ENCODE measurements at regions of chr1 and their contacts with region 1.

Region 1: DNA sequence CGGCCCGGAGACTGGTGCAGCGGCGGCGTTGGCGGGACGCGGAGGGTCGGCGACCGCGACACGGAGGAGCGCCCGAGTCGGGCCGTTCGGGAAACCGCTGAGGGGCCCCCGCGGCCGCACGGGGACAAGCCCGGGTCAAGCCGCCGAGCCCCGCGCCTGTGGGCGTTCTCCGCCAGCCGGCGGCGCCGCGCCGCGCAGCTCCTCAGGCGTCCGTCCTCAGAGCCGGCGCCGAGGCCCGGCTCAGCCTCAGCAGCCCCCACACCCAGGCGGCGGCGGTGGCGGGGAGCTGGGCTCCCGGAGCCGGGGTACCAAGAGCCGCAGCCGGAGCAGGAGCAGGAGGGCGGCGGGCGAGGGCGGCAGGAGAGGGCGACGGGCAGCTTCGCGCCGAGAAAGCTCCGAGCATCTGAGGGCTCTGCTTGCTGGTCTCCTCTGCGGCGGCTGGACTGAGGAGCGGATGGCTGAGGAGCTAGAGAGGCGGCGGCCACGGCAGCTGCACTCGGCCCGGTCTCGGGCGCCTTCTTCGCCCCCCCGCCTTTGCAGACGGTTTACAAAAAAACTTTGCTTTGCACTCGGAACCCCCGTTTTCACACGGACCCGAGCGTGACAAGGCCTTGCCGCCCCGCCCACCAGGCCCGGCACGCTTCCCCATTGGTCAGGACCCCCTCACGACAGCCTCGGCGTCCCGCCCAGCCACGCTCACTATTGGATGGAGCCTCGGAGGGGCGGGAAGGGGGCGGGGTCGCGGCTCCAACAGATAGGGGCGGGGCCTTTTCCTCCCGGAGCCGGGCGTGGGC is at the start of gene SLC30A1:
- DNase-seq: peak; percentile 98
- H3K4me3 ChIP-seq: peak within 1 kb of the TSS; percentile 74 to 99 (median 98)
- H3K27ac ChIP-seq: peak within 1 kb of the TSS; percentile 64
- H3K4me1 ChIP-seq: peaks cover 33% of the 10 kb centered on the region
- H3K27me3 ChIP-seq: no peaks in the 10 kb centered on the region
- CTCF ChIP-seq: no peak
- POLR2A ChIP-seq: peak; percentile 94
- total RNA-seq, gene SLC30A1: 21.5 and 22.1 TPM in 2 replicates

Region 2: DNA sequence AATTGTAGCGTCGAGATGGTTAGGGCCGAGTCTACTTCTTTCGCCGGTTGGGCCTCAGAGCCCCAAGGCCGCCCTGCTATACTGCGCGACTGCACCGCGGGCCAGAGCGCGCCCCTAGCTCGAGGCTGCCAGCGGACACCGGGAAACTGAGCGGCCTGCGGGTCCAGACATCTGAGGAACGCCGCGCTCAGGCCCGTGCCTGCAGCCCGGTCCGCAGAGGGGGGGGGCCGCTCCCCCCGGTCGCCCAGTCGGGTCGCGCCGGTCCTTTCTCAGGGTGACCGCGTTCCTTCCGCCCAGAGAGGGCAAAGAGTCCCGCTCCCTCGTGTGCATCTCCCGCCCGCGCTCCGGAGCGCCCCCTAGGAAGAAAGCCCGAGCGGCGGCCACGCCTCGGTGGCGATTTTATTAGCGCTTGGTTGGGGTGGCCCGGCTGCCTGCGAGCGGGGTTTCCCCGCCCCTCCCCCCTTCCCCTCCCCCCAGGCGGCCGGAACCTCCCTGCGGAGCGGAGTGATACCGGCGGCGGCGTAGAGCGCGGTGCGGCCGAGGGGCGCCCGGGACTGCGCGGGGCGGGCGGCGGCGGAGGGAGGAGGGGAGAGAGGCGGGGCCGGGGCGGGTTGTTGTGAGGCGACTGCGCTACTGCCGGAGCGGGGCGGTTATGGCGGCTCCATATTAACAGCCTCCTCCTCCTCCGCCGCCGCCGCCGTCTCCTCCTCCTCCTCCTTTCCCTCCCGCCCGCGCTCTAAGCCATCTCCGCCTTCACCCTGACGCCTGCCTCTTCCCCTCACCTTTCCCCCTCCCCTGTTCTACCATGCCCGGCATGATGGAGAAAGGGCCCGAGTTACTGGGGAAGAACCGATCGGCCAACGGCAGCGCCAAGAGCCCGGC is 319.8 kb before region 1 on chr1 and contains the start of gene RCOR3:
- CTCF ChIA-PET with region 1: no interaction called
- POLR2A ChIA-PET with region 1: no interaction called
- dilution Hi-C with region 1: no loop called
- intact Hi-C with region 1: loop called (anchors 2 kb)
- DNase-seq: peak; percentile 80
- H3K4me3 ChIP-seq: peak within 1 kb of the TSS; percentile 84 to 95 (median 86)
- H3K27ac ChIP-seq: peak within 1 kb of the TSS; percentile 85
- H3K4me1 ChIP-seq: peaks cover 13% of the 10 kb centered on the region
- H3K27me3 ChIP-seq: no peaks in the 10 kb centered on the region
- CTCF ChIP-seq: peak; percentile 50 to 74
- POLR2A ChIP-seq: peak; percentile 14
- total RNA-seq, gene RCOR3: 34.0 and 35.7 TPM in 2 replicates

Region 3: DNA sequence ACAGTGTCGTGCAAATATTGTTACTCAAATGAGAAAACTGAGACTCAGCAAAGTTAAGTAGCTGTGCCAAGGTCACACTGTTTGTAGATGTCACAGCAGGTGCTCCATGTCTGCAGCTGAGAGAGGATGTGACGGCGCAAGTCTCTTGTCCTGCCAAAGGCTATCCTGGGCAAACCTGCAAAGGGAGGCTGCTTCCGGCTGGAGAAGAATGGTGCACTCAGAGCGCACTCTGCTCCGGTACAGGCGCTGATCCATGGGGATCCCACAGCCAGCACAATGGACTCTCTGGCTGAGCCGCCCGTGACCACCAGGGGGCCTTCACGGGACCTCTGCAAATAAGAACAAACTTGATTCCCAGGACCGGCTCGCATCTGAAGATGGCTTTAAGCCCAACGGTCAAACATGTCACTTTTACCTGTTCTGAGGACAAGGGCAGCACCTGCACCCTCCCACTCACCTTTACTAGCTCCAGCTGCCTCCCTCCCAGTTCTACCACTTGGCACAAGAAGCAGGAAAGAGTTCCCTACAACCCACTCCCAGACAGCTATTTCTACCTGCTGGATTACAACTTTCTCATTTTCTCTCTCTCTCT is 108.8 kb before region 1 on chr1:
- CTCF ChIA-PET with region 1: no interaction called
- POLR2A ChIA-PET with region 1: no interaction called
- dilution Hi-C with region 1: no loop called
- intact Hi-C with region 1: loop called (anchors 2 kb)
- DNase-seq: peak; percentile 80
- H3K4me3 ChIP-seq: no peak overlapping the region
- H3K27ac ChIP-seq: no peak overlapping the region
- H3K4me1 ChIP-seq: peaks cover 20% of the 10 kb centered on the region
- H3K27me3 ChIP-seq: peaks cover 0 to 7% of the 10 kb centered on the region in 2 experiments
- CTCF ChIP-seq: peak; percentile 92 to 96
- POLR2A ChIP-seq: no peak

Region 4: DNA sequence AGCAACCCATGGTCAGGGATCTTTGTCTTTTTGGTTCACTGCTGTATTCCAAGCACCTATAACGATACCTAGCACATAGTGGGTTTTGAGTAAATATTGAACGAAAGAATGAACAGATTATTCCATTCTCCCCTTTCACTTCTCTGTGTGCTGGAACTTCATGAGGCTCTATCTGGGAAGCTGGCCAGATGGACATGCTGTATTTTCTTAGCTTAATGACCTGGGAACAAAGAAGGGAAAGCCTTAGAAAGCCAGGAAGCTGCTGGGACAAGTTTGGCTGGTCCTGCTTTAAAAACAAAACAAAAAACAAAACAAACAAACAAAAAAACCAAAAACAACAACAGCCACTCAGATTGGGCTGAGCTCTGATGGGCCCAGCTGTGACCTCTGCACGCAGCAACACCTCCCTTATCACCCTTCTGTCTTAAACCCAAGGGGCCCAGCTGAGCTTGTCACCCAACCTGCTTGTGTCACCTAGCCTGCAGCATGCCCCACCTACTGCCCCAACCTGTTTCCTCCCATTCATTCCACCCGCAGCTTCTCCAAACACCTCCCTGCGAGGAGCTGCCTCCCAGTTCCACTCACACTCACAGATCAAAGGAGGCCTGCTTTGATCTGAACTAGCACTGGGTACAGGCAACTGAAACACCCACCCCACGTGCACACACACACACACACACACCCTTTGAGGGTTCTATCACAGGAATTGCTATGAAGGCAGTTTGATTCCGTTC is 37.0 kb before region 1 on chr1:
- CTCF ChIA-PET with region 1: no interaction called
- POLR2A ChIA-PET with region 1: no interaction called
- dilution Hi-C with region 1: no loop called
- intact Hi-C with region 1: no loop called
- DNase-seq: peak; percentile 84
- H3K4me3 ChIP-seq: no peak overlapping the region
- H3K27ac ChIP-seq: no peak overlapping the region
- H3K4me1 ChIP-seq: peaks cover 14% of the 10 kb centered on the region
- H3K27me3 ChIP-seq: no peaks in the 10 kb centered on the region
- CTCF ChIP-seq: no peak
- POLR2A ChIP-seq: no peak

Region 5: DNA sequence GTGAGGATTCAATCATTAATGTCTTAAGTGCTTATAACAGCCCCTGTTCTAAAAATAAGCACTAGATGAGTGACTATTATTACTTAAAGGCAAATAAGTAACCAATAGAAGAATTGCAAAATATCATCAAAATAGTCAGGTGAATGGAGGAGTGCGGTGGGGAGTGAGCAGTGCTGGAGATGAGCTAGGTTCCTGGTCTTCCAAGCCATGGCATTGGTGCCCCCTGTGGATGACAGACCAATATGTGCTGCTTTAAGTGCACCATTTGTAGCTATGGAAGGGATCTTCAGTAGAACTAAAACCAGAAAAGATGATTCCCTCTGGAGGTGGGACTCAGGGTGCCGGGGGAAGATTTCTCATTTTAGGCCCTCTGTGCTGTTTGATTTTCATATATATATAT is 46.2 kb after region 1 on chr1:
- CTCF ChIA-PET with region 1: interaction called, 12 read pairs
- POLR2A ChIA-PET with region 1: no interaction called
- dilution Hi-C with region 1: no loop called
- intact Hi-C with region 1: no loop called
- DNase-seq: no peak
- H3K4me3 ChIP-seq: no peak overlapping the region
- H3K27ac ChIP-seq: no peak overlapping the region
- H3K4me1 ChIP-seq: peaks cover 2% of the 10 kb centered on the region
- H3K27me3 ChIP-seq: no peaks in the 10 kb centered on the region
- CTCF ChIP-seq: no peak
- POLR2A ChIP-seq: no peak

Region 6: DNA sequence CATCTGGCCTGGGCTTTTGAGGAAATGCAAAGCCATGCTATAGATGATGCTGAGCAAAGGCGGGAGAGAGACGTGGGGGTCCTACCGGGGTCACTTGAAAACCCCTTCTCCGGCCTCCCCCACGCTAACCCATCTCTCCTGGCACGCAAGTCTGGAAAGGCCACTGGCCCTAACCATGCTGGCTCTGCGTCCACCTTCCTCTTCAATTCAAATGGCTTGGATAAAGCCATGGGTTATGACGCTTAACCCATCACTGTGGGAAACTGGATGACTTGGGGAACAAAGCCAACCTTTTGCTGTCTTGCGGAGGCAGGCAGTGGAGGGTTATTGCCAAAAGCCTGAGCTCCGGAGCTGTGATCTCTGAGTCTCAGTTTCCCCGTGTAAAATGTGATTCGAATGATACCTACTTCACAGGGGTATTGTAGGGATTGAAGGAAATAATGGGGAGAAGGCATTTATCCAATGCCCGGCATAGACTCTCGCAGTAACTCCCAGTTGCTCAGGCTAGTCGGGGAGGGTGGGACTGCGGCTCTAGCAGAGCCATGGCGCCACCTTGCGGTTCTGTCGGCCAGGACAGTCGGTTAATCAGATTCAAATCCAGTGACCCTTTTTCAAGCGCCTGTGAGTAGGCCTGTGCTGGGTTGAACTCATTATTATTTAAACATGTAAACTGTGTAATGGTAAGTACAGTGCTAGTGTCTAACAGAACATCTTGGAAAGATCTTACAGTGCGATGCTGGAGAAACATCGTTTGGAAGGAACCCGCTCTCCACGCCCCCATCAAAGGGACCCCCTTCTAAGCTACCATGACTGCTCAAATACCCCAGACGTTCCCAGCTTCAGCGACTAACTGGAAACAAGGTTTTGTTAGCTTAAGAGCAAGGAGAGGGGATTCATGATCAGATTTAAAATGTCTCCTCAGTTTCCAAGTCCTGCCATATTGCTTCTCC is 76.3 kb after region 1 on chr1:
- CTCF ChIA-PET with region 1: interaction called, 31 read pairs
- POLR2A ChIA-PET with region 1: interaction called, 4 read pairs
- dilution Hi-C with region 1: no loop called
- intact Hi-C with region 1: loop called (anchors 1 kb)
- DNase-seq: peak; percentile 87
- H3K4me3 ChIP-seq: no peak overlapping the region
- H3K27ac ChIP-seq: peak overlapping the region; percentile 80
- H3K4me1 ChIP-seq: peaks cover 20% of the 10 kb centered on the region
- H3K27me3 ChIP-seq: no peaks in the 10 kb centered on the region
- CTCF ChIP-seq: peak; percentile 89 to 96
- POLR2A ChIP-seq: no peak